ENCODE measurements at regions of chr22 and their contacts with region 1.

Region 1: DNA sequence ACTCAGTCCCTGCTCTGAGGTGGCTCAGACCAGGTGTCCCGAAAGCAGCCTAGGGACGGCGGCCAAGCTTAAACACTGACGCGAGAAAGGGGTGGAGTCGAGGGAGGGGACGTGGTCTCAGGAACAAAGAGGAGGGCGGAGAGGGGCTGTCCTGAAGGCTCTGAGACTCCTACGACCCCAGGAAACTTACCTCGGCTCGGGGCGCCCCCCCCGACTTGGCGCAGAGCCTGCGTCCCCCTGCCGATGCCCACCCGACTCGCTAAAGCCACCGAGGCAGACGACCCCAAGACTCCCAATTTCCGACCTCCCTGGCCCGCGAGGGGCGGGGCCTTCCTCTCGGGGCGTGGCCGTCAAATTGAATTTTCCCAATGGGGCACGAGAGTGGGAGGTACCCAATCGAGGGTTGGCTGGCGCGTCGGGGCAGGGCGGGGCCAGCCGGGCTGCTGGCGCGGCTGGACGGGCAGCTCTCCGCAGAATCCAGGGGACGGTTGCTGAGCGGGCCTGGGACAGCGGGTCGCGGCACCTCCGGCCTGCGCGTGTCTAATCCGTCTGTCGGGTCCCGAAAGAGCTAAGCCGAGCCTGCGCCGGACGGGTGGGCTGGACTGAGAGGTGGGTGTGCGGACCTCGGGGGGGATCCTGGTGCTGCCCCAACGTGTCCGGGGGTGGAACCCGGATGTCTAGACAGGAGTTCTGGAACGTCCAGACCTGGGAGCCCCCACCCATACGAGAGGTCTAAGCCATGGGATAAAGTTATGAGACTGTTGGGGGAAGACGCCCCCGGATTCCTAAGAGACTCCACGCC is at the start of gene SMTN:
- DNase-seq: peak; percentile 41
- H3K4me3 ChIP-seq: peak within 1 kb of the TSS; percentile 63
- H3K27me3 ChIP-seq: no peaks in the 10 kb centered on the region
- CTCF ChIP-seq: no peak
- polyA plus RNA-seq, gene SMTN: 16.9 and 45.7 TPM in 2 replicates

Region 2: DNA sequence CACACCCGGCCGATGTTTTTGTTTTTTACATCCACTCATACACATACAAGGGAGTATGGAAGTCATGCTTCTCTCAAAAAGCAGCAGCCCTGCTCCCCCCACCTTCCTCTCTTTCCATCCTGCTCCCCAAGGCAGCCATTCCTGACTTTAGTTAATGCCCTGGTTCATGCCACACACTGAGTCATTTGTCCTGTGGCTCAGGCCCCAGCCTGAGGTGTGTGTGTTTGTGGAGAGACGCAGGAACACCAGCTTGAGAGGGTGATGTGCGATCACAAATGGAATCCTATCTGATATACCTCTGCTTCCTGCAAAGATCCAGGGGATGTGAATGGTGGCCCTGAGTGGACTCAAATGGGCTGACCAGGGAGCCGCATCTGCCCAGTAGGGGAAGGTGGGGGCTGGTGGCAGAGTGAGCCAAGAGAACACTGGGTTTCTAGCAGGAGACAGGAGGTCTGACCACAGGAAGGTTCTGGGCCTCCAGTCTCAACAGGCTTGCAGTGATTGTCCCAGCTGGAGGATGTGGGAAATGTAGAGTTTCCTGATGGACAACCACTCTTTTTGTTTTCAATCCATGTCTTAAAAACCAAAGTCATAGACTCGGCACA is 299.7 kb before region 1 on chr22:
- CTCF ChIA-PET with region 1: no interaction called
- POLR2A ChIA-PET with region 1: no interaction called
- DNase-seq: no peak
- H3K4me3 ChIP-seq: no peak overlapping the region
- H3K27me3 ChIP-seq: no peaks in the 10 kb centered on the region
- CTCF ChIP-seq: no peak

Region 3: DNA sequence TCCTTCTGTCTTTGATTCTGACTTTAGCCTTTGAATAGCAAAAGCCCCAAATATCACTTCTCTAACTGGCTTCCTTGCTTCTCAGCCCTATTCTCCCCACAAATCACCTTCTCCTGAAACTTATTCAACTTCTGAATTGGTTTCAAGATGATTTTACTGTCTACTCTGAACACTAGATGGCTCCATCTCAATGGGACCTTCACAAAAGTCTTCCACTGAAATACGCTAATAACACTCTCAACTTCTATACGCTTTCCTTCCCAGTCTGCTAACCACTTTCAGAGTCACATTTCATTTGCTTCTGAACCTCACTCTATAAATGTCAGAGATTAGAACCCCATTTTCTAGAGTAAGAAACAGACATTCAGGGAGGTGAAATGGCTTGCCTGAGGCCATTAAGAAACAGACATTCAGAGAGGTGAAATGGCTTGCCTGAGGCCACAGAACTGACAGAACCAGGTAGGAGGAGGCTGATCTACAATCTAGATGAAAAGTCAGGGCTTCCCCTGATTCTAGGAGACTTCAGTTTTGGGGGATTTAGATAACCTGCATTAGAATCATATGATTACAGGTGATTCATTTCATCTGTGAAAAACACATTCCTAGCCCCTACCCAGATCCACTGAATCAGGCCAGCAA is 133.1 kb before region 1 on chr22:
- CTCF ChIA-PET with region 1: interaction called, 101 read pairs
- POLR2A ChIA-PET with region 1: no interaction called
- DNase-seq: no peak
- H3K4me3 ChIP-seq: no peak overlapping the region
- H3K27me3 ChIP-seq: no peaks in the 10 kb centered on the region
- CTCF ChIP-seq: peak; percentile 61

Region 4: GRCh38 chr22:31020334-31020733 is 60.7 kb before region 1 on chr22:
- CTCF ChIA-PET with region 1: no interaction called
- POLR2A ChIA-PET with region 1: no interaction called
- DNase-seq: no peak
- H3K4me3 ChIP-seq: no peak overlapping the region
- H3K27me3 ChIP-seq: no peaks in the 10 kb centered on the region
- CTCF ChIP-seq: no peak

Region 5: DNA sequence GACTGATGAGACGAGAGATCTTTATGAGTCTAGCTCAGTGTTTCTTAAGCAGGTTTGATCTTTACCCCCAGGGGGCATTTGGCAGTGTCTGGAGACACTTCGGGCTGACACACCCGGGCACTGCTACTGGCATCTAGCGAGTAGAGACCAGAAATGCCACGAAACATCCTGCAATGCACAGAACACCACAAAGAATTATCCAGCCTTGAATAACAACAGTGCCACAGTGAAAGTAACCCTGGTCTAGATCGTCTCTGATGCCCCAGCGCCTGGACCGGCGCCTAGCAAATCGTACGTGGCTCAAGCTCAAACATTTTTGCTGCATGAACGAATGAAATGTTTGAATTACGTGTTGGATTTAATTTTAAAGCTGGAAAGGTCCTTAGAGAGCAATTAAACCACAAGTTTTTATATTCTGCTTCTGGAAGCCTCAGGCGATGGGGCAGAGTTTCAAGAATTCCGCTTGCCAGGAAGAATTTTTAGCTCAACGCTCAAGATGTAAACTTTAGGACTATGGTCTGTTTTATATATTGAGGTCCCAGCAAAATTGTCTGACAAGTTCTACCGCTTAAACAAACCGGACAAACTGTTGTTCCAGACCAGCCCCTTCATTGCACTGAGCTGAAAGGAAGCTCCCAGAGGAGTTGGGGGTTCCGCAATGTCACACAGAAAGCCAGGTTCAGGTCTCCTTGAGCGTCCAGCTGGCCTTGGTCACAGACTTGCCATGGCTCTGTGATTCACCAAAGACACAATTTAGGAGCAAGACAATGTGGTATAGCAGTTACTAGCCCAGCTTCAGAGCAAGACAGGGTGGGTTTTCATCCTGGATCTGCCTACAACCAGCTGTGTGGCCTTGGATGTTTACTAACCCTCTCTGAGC is 44.1 kb before region 1 on chr22:
- CTCF ChIA-PET with region 1: interaction called, 40 read pairs
- POLR2A ChIA-PET with region 1: interaction called, 4 read pairs
- DNase-seq: peak; percentile 83
- H3K4me3 ChIP-seq: no peak overlapping the region
- H3K27me3 ChIP-seq: 0 out of 2 replicates have a peak, but pooled peaks cover 1% of the 10 kb centered on the region
- CTCF ChIP-seq: peak; percentile 30

Region 6: DNA sequence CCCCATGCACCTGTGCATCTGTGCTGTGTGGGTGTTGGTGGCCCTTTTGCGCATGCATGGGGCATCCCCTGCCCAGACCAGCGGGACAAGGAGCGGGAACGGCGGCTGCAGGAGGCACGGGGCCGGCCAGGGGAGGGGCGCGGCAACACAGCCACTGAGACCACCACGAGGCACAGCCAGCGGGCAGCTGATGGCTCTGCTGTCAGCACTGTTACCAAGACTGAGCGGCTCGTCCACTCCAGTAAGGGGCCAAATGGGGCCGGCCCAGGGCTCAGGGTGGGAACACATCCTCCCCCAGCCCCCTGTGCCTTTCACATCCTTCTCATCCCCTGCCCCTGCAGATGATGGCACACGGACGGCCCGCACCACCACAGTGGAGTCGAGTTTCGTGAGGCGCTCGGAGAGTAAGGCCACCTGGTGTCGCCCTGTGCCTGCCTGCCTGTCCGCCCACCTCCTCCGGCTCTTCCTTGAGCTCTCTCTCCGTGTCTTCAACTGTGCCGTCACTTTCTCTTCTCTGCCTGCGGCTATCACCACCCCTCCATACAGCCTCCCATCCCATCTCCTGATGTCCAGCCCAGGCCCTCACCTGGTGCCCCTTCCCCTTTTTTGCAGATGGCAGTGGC is 15.7 kb after region 1 on chr22:
- CTCF ChIA-PET with region 1: interaction called, 30 read pairs
- POLR2A ChIA-PET with region 1: interaction called, 3 read pairs
- DNase-seq: no peak
- H3K4me3 ChIP-seq: no peak overlapping the region
- H3K27me3 ChIP-seq: no peaks in the 10 kb centered on the region
- CTCF ChIP-seq: no peak

Region 7: GRCh38 chr22:31122532-31123291 is 41.7 kb after region 1 on chr22 and contains the start of gene INPP5J:
- CTCF ChIA-PET with region 1: no interaction called
- POLR2A ChIA-PET with region 1: no interaction called
- DNase-seq: no peak
- H3K4me3 ChIP-seq: peak within 1 kb of the TSS; percentile 52
- H3K27me3 ChIP-seq: no peaks in the 10 kb centered on the region; the same call in 1 of the 2 replicates
- CTCF ChIP-seq: no peak
- polyA plus RNA-seq, gene INPP5J: 1.1 and 1.5 TPM in 2 replicates

Region 8: GRCh38 chr22:31148953-31149627 is 68.0 kb after region 1 on chr22:
- CTCF ChIA-PET with region 1: interaction called, 26 read pairs
- POLR2A ChIA-PET with region 1: no interaction called
- DNase-seq: no peak
- H3K4me3 ChIP-seq: no peak overlapping the region
- H3K27me3 ChIP-seq: no peaks in the 10 kb centered on the region; the same call in 1 of the 2 replicates
- CTCF ChIP-seq: peak; percentile 99

Measured in BJ (cell line).